ENCODE measurements at regions of chr19 and their contacts with region 1.

Region 1: DNA sequence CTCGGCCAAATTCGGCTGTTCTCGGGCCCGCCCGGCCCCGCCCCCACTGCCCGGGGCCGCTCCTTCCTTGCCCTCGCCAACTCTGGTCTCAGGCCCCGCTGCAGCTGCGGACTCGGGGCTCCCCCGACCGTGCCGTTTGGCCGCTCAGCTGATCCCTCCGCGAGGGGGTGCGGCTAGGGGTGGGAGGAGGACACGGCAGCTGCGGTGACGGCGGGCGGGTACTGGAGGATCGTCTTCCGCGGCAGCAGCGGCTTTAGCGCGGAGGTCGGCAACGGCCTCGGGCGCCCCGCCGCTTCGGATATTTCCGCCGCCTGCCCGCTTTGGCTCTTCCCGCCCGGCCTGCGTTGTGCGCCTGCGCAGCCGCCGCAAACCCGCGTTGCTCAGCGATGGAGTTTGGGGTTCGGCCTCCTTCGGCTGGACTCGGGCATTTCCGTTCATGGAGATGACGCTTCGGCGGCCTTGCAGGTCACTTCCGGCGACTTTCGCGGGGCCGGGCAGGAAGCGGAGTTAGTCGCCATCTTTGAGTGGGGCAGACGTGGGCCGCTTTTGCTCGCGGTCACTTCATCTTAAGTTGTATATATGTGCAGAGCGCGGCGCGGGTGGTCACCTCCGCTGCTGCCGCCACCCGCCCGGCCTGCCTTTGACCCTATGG is 338 bp upstream of the UBE2M start:
- DNase-seq: peak; percentile 100
- H3K4me3 ChIP-seq: peak overlapping the region; percentile 61 to 84 (median 82)
- H3K27ac ChIP-seq: peak overlapping the region; percentile 99 to 100 (median 100)
- H3K4me1 ChIP-seq: peaks cover 0 to 72% (median 67%) of the 10 kb centered on the region in 4 donors
- H3K27me3 ChIP-seq: no peaks in the 10 kb centered on the region
- CTCF ChIP-seq: no peak
- EP300 ChIP-seq: peak in 1 of 4 donors; percentile 20
- POLR2A ChIP-seq: peak in 1 of 2 donors; percentile 65

Region 2: DNA sequence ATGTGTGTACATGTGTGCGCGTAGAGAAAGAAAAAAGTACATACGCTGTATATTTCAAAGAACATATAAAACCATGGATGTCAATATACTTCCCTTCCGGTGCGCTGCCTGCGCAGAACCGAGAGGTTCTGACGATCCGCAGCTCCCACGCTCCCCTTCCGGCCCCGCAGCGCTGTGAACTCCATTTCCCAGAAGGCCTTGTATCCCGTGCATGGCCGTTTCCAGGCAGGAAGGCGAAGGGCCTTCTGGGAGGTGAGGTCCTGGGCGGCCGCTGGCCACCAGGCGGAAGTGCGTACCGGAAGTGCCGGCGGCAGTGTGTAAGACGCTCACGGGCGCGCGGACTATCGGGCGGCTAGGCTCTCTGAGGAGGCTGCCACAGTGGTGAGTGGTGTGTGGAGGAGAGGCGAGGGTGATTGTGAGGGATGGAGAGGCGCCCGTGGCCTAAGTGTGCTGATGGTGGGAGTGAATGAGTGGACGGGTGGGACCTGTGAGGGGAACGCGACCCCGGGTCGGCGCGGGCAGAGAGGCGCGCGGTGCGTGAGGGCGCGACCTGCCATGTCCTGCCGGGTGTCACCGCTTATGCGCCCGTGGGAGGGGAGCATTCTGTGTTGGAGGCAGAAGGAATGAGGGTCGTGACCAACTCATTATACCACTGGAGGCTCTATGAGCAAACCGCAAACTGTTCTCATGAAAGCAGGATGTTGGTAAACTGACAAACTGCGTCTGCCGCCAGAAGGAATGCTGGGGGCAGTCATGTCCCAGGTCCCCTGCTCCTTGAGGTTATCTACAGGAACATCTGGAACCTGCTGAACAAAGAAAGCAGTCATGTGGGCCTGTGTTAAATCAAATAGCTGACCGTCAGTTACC is 253.5 kb before region 1 on chr19 and contains the start of gene ERVK3-1:
- intact Hi-C with region 1: no loop called
- DNase-seq: peak; percentile 98
- H3K4me3 ChIP-seq: peak within 1 kb of the TSS; percentile 80 to 93 (median 90)
- H3K27ac ChIP-seq: peak within 1 kb of the TSS; percentile 88 to 93 (median 90)
- H3K4me1 ChIP-seq: peaks cover 0 to 17% (median 14%) of the 10 kb centered on the region in 4 donors
- H3K27me3 ChIP-seq: no peaks in the 10 kb centered on the region
- CTCF ChIP-seq: peak in 3 of 4 experiments; percentile 21 to 44 (median 36)
- EP300 ChIP-seq: peak in 1 of 4 donors; percentile 62
- POLR2A ChIP-seq: peak; percentile 83 to 88
- total RNA-seq, gene ERVK3-1: 41.7 to 49.4 (median 44.0) TPM

Region 3: DNA sequence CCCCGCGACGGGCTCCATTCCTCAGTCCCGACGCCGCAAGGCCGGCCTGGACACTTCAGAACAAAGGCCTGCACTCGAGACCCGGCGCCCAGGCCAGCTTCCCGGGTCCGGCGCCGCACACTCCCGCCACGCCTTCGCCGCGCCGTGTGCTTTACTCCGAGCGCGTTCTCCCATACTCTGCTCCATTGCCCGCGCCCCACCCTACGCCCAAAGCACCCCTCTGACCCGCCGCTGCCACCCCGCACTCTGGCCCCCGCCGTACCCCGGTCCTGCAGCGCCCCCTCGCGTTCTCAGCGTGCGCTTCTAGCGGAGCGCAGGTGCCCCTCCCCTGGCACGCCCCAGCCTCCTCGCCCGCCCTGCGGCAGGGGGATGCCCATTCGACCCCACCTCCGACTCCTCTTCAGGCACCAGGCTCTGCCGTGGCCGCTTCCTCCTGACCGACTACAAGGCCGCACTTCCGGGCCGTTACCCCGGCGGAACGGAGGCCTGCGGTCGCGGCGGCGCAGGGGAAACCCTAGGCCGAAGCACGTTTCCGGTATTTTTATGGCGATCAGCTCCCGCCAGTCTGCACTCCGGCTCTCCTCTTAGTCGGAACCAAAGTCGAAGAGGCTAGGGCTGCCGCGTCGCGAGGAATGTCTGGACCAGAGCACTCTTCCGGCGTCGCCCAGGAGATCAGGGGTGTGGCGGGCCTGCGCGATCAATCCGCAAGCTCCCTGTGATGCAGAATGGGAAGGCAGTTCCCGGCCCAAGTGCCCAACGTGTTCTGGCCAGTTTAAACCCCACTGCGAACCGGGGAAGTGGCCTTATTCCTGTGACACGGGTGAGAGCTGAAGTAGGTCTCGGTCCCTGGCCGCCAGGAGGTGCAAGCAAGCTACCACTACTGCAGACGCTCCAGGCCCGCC is 39.1 kb before region 1 on chr19 and contains the start of gene ZBTB45:
- intact Hi-C with region 1: loop called (anchors 2 kb)
- DNase-seq: peak; percentile 97
- H3K4me3 ChIP-seq: peak within 1 kb of the TSS; percentile 74 to 75 (median 75)
- H3K27ac ChIP-seq: peak within 1 kb of the TSS; percentile 92 to 97 (median 96)
- H3K4me1 ChIP-seq: peaks cover 0 to 44% (median 40%) of the 10 kb centered on the region in 4 donors
- H3K27me3 ChIP-seq: no peaks in the 10 kb centered on the region
- CTCF ChIP-seq: peak; percentile 55 to 90 (median 75)
- EP300 ChIP-seq: peak in 1 of 4 donors; percentile 31
- POLR2A ChIP-seq: peak; percentile 48 to 65
- total RNA-seq, gene ZBTB45: 7.6 to 13.8 (median 8.4) TPM

Region 4: DNA sequence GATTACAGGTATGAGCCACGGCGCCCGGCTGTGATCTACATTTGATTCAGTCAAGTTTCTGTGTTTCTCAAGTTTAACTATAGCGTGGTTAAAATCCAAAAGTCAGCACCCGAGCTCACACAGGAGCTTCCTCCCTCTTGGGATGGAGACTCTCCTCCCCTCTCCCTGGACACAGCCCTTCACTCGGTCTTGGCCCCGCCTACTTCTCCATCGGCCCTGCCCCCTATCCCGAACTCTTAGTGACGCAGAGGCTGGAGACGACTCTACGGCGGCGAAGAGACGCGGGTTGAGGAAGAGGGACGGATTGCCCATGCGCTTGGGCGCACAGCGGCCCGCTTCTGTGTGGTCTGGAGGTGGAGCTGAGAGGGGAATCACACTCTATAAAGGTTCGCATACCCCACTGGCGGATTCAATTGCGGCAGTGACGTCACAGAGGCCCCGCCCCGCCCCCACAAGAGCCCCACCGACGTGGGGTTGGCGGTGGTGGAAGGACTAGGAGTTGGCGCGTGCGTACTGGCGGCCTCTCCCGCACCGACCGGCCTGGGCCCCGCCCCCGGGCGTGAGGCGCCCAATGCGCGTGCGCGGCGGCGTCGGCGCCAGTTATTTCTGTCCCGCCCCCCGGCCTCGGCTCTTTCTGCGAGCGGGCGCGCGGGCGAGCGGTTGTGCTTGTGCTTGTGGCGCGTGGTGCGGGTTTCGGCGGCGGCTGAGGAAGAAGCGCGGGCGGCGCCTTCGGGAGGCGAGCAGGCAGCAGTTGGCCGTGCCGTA is 14.7 kb before region 1 on chr19 and contains the start of gene TRIM28:
- intact Hi-C with region 1: loop called (anchors 1 kb)
- DNase-seq: peak; percentile 99
- H3K4me3 ChIP-seq: peak within 1 kb of the TSS; percentile 74 to 98 (median 97)
- H3K27ac ChIP-seq: peak within 1 kb of the TSS; percentile 86 to 98 (median 97)
- H3K4me1 ChIP-seq: peaks cover 0 to 34% (median 26%) of the 10 kb centered on the region in 4 donors
- H3K27me3 ChIP-seq: peaks cover 0 to 8% (median 0%) of the 10 kb centered on the region in 3 donors
- CTCF ChIP-seq: peak in 1 of 4 experiments; percentile 15
- EP300 ChIP-seq: peak in 1 of 4 donors; percentile 69
- POLR2A ChIP-seq: peak; percentile 94 to 98
- total RNA-seq, gene TRIM28: 157 to 236 (median 207) TPM

Region 5: GRCh38 chr19:58572818-58573657 is 14.3 kb after region 1 on chr19 and contains the start of gene MZF1:
- intact Hi-C with region 1: loop called (anchors 2 kb)
- DNase-seq: peak; percentile 100
- H3K4me3 ChIP-seq: peak within 1 kb of the TSS; percentile 58 to 87 (median 70)
- H3K27ac ChIP-seq: peak within 1 kb of the TSS; percentile 92 to 99 (median 98)
- H3K4me1 ChIP-seq: peaks cover 0 to 46% (median 40%) of the 10 kb centered on the region in 4 donors
- H3K27me3 ChIP-seq: no peaks in the 10 kb centered on the region
- CTCF ChIP-seq: peak in 1 of 4 experiments; percentile 36
- EP300 ChIP-seq: peak in 1 of 4 donors; percentile 80
- POLR2A ChIP-seq: peak; percentile 6 to 44
- total RNA-seq, gene MZF1: 13.6 to 31.5 (median 20.1) TPM